A549 (cell line): ENCODE measurements at regions of chr3 and their contacts with region 1.

Region 1: DNA sequence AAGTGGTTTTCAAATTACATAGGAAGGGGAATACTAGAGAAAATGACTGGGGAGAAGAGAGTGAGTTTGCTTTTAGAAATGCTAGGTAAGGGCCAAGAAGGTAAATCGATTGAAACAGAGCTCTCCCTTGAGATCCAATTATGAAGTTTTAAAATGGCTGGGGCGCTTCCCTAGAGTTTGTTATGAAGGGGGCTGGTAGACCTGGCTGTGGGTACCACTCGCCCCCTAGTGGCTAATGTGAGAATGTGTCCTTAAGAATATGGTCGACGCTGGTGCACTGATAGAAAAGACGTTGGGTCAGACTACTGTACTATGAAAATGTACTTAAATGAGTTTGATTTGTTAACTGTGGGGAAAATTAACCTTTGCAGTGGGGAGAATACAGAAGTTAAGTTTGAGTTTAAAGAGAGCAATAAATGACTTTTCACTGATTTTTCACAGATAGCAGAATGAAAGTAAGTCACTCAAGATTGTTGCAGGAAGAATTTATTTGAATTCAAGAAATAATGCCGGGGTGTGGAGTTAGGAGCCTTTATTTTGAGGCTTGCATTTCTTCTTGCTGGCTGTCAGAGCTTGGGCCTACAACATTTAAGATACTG is 9.2 kb downstream of the TMPRSS7 start:
- DNase-seq: peak; percentile 73 to 82
- ATAC-seq: peak; percentile 96 to 99
- H3K4me3 ChIP-seq: no peak overlapping the region
- H3K27ac ChIP-seq: no peak overlapping the region
- H3K4me1 ChIP-seq: peaks cover 11% of the 10 kb centered on the region; the same call in 1 of the 3 replicates
- CTCF ChIP-seq: peak; percentile 92
- EP300 ChIP-seq: no peak
- POLR2A ChIP-seq: no peak
- RAD21 ChIP-seq: peak; percentile 80 to 81

Region 2: DNA sequence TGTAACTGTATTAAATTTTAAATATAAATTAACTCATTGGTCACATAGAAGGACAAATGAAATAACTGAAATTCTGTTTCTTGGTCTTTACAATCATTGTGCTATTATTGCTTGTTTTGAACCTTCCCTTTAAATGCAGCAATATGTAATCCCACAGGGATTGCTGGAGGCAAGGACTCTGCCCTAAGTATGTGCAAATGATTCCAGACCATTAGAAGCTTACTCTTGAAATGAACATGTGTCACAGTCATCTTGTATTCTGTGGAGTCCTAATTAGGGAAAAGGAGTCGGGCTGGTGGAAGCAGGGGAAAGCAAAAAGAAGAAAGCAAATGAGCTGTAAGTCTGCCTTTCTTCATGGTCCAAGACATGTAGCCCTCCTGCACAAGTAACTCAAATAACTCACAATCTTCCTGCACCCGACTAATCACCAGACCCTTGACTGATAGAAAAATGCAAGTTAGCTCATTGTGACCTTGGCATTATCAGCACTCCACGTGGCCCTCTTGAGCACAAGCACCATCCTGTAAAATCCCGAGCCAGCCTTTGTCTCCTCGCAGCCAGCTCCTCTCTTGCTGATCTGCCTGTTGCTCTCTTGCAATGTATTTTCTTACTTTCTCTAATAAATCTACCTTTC is 11.5 kb before region 1 on chr3:
- CTCF ChIA-PET with region 1: interaction called, 39 read pairs
- POLR2A ChIA-PET with region 1: no interaction called
- DNase-seq: no peak
- ATAC-seq: no peak
- H3K4me3 ChIP-seq: no peak overlapping the region
- H3K27ac ChIP-seq: no peak overlapping the region
- H3K4me1 ChIP-seq: no peaks in the 10 kb centered on the region
- CTCF ChIP-seq: no peak
- EP300 ChIP-seq: no peak
- POLR2A ChIP-seq: no peak
- RAD21 ChIP-seq: no peak

Region 3: GRCh38 chr3:112056451-112056978 is 12.8 kb after region 1 on chr3:
- CTCF ChIA-PET with region 1: interaction called, 17 read pairs
- POLR2A ChIA-PET with region 1: no interaction called
- DNase-seq: peak in 1 of 2 experiments; percentile 26
- ATAC-seq: peak; percentile 55 to 66; a peak in 4 of 6 replicates
- H3K4me3 ChIP-seq: no peak overlapping the region
- H3K27ac ChIP-seq: 0 out of 6 replicates have a peak overlapping the region, but pooled peaks of 1 of the 2 experiments have one; percentile 42
- H3K4me1 ChIP-seq: peaks cover 15% of the 10 kb centered on the region
- CTCF ChIP-seq: no peak
- EP300 ChIP-seq: no peak
- POLR2A ChIP-seq: no peak
- RAD21 ChIP-seq: no peak